ENCODE measurements at regions of chr2 and their contacts with region 1.

Region 1: GRCh38 chr2:37402636-37403035 is 58.2 kb downstream of the QPCT start:
- DNase-seq: no peak
- ATAC-seq: no peak
- H3K4me3 ChIP-seq: no peak overlapping the region
- H3K27ac ChIP-seq: no peak overlapping the region
- H3K4me1 ChIP-seq: no peaks in the 10 kb centered on the region
- H3K27me3 ChIP-seq: no peaks in the 10 kb centered on the region
- CTCF ChIP-seq: no peak

Region 2: GRCh38 chr2:37877457-37878315 is 475.1 kb after region 1 on chr2:
- intact Hi-C with region 1: loop called (anchors 10 kb)
- DNase-seq: no peak
- ATAC-seq: peak; percentile 87
- H3K4me3 ChIP-seq: no peak overlapping the region
- H3K27ac ChIP-seq: no peak overlapping the region
- H3K4me1 ChIP-seq: no peaks in the 10 kb centered on the region
- H3K27me3 ChIP-seq: peaks cover 5% of the 10 kb centered on the region
- CTCF ChIP-seq: peak; percentile 79